ENCODE measurements at regions of chr10 and their contacts with region 1.

Region 1: GRCh38 chr10:86710987-86711512 is 42.7 kb downstream of the LDB3 start:
- DNase-seq: peak; percentile 79 to 90 (median 85)
- ATAC-seq: peak; percentile 95
- H3K4me3 ChIP-seq: peak overlapping the region; percentile 73
- H3K4me3 Mint-ChIP-seq: peak overlapping the region; percentile 82 to 93 (median 88)
- H3K27ac ChIP-seq: peak overlapping the region; percentile 87
- H3K27ac Mint-ChIP-seq: peak overlapping the region; percentile 94 to 97 (median 95)
- H3K4me1 ChIP-seq: peaks cover 5 to 9% of the 10 kb centered on the region in 2 donors
- H3K4me1 Mint-ChIP-seq: peaks cover 4 to 17% (median 8%) of the 10 kb centered on the region in 7 donors
- H3K27me3 ChIP-seq: no peaks in the 10 kb centered on the region
- H3K27me3 Mint-ChIP-seq: no peaks in the 10 kb centered on the region

Region 2: GRCh38 chr10:86688398-86688921 is 22.6 kb before region 1 on chr10:
- CTCF ChIA-PET with region 1: no interaction called
- POLR2A ChIA-PET with region 1: no interaction called
- intact Hi-C with region 1: loop called in 1 of 2 experiments (anchors 1 kb)
- DNase-seq: peak in 8 of 9 donors; percentile 26 to 55 (median 42)
- ATAC-seq: peak; percentile 83
- H3K4me3 ChIP-seq: no peak overlapping the region
- H3K4me3 Mint-ChIP-seq: peak overlapping the region in 5 of 10 donors; percentile 5 to 34 (median 16)
- H3K27ac ChIP-seq: no peak overlapping the region
- H3K27ac Mint-ChIP-seq: no peak overlapping the region
- H3K4me1 ChIP-seq: no peaks in the 10 kb centered on the region
- H3K4me1 Mint-ChIP-seq: peaks cover 0 to 13% (median 4%) of the 10 kb centered on the region in 7 donors
- H3K27me3 ChIP-seq: no peaks in the 10 kb centered on the region
- H3K27me3 Mint-ChIP-seq: peaks cover 0 to 4% (median 0%) of the 10 kb centered on the region in 5 donors

Region 3: DNA sequence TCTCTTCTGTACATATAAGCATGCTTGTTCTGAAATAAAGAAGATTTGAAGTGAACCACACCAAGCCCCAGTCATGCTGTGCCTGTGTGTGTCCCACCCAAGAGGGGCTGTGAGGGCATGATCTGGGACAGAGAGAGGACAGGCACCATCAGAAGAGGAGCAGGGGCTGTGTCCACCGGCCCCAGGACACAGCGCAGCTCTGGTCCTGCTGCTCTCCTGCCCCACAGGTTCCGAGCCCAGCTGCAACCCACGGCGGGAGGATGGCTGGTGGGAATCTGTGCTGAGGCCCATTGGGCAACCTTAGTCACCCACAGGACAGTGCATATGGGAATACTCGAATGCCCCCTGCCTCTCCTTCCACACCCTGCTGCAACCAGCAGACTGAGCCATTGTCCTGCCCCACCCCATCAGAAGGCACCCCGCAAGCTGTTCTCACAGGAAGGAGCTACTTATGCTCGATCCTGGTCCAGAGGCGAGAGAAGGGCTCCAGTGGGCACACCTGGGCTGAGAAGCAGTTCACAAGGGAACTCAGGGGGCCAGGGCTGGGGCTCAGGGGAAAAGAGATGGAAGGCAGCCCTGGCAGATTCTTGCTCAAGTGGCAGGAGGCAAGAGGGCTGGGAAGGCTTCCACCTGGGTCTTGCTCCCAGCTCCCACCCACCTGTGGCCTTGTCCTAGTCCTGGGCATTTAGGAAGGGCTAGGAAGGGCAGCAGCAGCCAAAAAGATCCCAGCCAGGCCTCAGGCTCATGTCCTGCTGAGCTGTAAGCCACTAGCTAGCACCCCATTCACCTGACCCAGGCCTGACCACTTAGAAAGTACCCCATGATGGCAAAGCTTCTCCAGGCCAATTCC is 10.8 kb before region 1 on chr10:
- CTCF ChIA-PET with region 1: no interaction called
- POLR2A ChIA-PET with region 1: no interaction called
- intact Hi-C with region 1: no loop called
- DNase-seq: no peak
- ATAC-seq: no peak
- H3K4me3 ChIP-seq: no peak overlapping the region
- H3K4me3 Mint-ChIP-seq: no peak overlapping the region
- H3K27ac ChIP-seq: no peak overlapping the region
- H3K27ac Mint-ChIP-seq: no peak overlapping the region
- H3K4me1 ChIP-seq: no peaks in the 10 kb centered on the region
- H3K4me1 Mint-ChIP-seq: no peaks in the 10 kb centered on the region
- H3K27me3 ChIP-seq: no peaks in the 10 kb centered on the region
- H3K27me3 Mint-ChIP-seq: peaks cover 0 to 4% (median 0%) of the 10 kb centered on the region in 5 donors

Region 4: GRCh38 chr10:86899670-86900276 is 188.7 kb after region 1 on chr10:
- CTCF ChIA-PET with region 1: no interaction called
- POLR2A ChIA-PET with region 1: no interaction called
- intact Hi-C with region 1: loop called (anchors 1 kb)
- DNase-seq: peak in 6 of 9 donors; percentile 10 to 32 (median 26)
- ATAC-seq: peak; percentile 46
- H3K4me3 ChIP-seq: no peak overlapping the region
- H3K4me3 Mint-ChIP-seq: no peak overlapping the region
- H3K27ac ChIP-seq: no peak overlapping the region
- H3K27ac Mint-ChIP-seq: no peak overlapping the region
- H3K4me1 ChIP-seq: no peaks in the 10 kb centered on the region
- H3K4me1 Mint-ChIP-seq: peaks cover 0 to 4% (median 0%) of the 10 kb centered on the region in 7 donors
- H3K27me3 ChIP-seq: no peaks in the 10 kb centered on the region
- H3K27me3 Mint-ChIP-seq: peaks cover 0 to 8% (median 0%) of the 10 kb centered on the region in 5 donors

Region 5: GRCh38 chr10:86965986-86966654 is 255.1 kb after region 1 on chr10:
- CTCF ChIA-PET with region 1: interaction called, 3 read pairs
- POLR2A ChIA-PET with region 1: no interaction called
- intact Hi-C with region 1: loop called (anchors 1 kb)
- DNase-seq: no peak
- ATAC-seq: peak; percentile 1
- H3K4me3 ChIP-seq: peak overlapping the region; percentile 38
- H3K4me3 Mint-ChIP-seq: peak overlapping the region; percentile 55 to 87 (median 80)
- H3K27ac ChIP-seq: peak overlapping the region; percentile 61
- H3K27ac Mint-ChIP-seq: peak overlapping the region; percentile 54 to 90 (median 67)
- H3K4me1 ChIP-seq: peaks cover 4 to 45% of the 10 kb centered on the region in 2 donors
- H3K4me1 Mint-ChIP-seq: peaks cover 10 to 47% (median 43%) of the 10 kb centered on the region in 7 donors
- H3K27me3 ChIP-seq: no peaks in the 10 kb centered on the region
- H3K27me3 Mint-ChIP-seq: peaks cover 0 to 22% (median 0%) of the 10 kb centered on the region in 5 donors

Region 6: DNA sequence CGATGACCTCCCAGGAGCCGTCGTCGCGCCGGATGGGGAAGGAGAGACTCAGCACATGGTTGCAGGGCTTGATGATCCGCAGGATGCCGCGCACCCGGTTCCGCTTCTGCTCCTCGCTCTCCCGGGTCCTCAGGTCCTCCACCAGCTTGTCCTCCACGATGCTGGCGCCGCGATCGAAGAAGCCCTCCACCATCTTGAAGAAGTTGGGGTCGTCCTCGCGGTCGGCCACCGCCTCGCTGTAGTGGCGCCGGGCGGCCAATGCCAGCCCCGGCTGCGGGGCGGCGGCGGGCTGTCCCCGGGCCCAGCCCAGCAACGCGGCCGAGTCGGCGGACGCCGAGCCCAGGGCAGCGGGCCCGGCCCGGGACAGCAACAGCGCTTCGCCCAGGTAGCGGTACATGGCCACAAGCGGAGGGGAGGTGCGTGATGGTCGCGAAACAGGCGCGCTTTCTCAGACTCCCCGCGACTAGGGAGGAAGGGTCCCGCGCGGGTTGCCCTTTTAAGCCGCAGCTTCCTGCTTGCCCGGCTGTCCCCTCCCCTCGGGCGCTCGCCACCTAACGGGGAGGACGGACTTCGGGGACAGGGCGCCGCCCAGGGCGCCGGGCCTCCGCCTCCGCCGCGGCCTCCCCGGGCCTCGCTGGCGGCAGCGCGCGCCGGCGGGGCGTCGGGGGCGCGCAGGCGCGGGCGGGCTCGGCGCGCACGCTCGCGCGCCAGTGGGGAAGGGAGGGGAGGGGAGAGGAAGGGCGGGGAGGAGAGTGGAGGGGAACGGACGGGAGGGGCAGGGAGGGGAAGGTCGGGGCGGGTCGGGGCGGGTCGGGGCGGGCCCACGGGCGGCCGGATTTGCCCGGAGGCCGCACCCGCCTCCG is 383.6 kb after region 1 on chr10 and contains the starts of genes GLUD1 and SHLD2:
- CTCF ChIA-PET with region 1: no interaction called
- POLR2A ChIA-PET with region 1: interaction called, 3 read pairs
- intact Hi-C with region 1: loop called (anchors 1 to 2 kb)
- DNase-seq: peak; percentile 78 to 94 (median 84)
- ATAC-seq: peak; percentile 81
- H3K4me3 ChIP-seq: peak within 1 kb of the TSS; percentile 74
- H3K4me3 Mint-ChIP-seq: peak within 1 kb of the TSS; percentile 89 to 97 (median 94)
- H3K27ac ChIP-seq: peak within 1 kb of the TSS; percentile 88
- H3K27ac Mint-ChIP-seq: peak within 1 kb of the TSS; percentile 89 to 97 (median 94)
- H3K4me1 ChIP-seq: peaks cover 12 to 27% of the 10 kb centered on the region in 2 donors
- H3K4me1 Mint-ChIP-seq: peaks cover 38 to 65% (median 52%) of the 10 kb centered on the region in 7 donors
- H3K27me3 ChIP-seq: no peaks in the 10 kb centered on the region
- H3K27me3 Mint-ChIP-seq: no peaks in the 10 kb centered on the region
- total RNA-seq, gene GLUD1: 70.2 to 98.1 (median 73.2) TPM
- total RNA-seq, gene SHLD2: 19.3 to 31.4 (median 21.1) TPM